ENCODE measurements at regions of chr10 and their contacts with region 1.

Region 1: DNA sequence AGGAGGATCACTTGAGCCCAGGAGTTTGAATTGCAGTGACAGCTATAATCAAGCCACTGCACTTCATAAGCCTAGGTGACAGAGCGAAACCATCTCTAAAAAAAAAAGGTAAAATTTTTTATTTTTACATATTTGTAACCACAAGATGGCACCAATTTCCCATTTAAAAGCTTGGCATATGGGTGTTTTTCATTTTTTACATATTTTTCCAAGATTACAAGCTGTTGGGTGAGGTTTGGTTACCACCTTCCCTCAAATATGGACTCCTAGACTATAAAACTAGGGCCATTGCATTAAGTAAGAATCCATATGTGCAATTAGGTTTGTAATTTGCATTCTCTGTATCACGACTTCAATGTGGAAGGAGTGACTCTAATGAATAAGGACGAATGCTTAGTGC is 129.3 kb upstream of the ACBD5 start:
- DNase-seq: peak; percentile 12 to 25
- ATAC-seq: peak in 1 of 2 experiments; percentile 26; a peak in 1 of 6 replicates
- H3K4me3 ChIP-seq: no peak overlapping the region
- H3K27ac ChIP-seq: no peak overlapping the region
- H3K4me1 ChIP-seq: no peaks in the 10 kb centered on the region
- CTCF ChIP-seq: peak; percentile 66
- EP300 ChIP-seq: no peak
- POLR2A ChIP-seq: no peak
- RAD21 ChIP-seq: peak; percentile 60 to 77

Region 2: GRCh38 chr10:27388761-27389399 is 19.0 kb after region 1 on chr10:
- CTCF ChIA-PET with region 1: interaction called, 13 read pairs
- POLR2A ChIA-PET with region 1: no interaction called
- DNase-seq: no peak
- ATAC-seq: no peak
- H3K4me3 ChIP-seq: no peak overlapping the region
- H3K27ac ChIP-seq: no peak overlapping the region
- H3K4me1 ChIP-seq: peaks cover 8% of the 10 kb centered on the region
- CTCF ChIP-seq: no peak
- EP300 ChIP-seq: no peak
- POLR2A ChIP-seq: no peak
- RAD21 ChIP-seq: no peak

Region 3: DNA sequence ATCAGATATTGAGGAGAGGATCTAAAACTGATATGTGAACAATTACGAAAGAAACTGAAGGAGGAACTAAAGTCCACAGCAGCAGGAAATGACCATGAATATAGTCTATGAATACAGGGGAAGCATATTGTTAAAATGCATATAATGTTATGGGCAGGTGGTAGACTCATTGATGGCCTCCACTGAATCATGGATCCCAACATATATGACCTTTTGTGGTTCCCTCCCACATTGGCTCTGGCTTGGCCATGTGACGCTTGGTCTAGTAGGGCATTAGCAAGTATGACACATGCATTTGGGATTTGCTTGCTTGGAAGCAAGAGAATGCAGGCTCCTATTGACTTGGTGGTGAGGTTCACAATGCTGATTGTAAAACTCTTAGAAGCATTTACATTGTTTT is 79.0 kb after region 1 on chr10:
- CTCF ChIA-PET with region 1: no interaction called
- POLR2A ChIA-PET with region 1: no interaction called
- DNase-seq: peak in 1 of 2 experiments; percentile 17
- ATAC-seq: no peak
- H3K4me3 ChIP-seq: no peak overlapping the region
- H3K27ac ChIP-seq: no peak overlapping the region
- H3K4me1 ChIP-seq: no peaks in the 10 kb centered on the region
- CTCF ChIP-seq: no peak
- EP300 ChIP-seq: no peak
- POLR2A ChIP-seq: no peak
- RAD21 ChIP-seq: no peak

Region 4: GRCh38 chr10:28241741-28242399 is 872.0 kb after region 1 on chr10:
- CTCF ChIA-PET with region 1: interaction called, 12 read pairs
- POLR2A ChIA-PET with region 1: no interaction called
- DNase-seq: peak; percentile 43 to 53
- ATAC-seq: peak; percentile 78 to 80; a peak in 5 of 6 replicates
- H3K4me3 ChIP-seq: no peak overlapping the region
- H3K27ac ChIP-seq: no peak overlapping the region
- H3K4me1 ChIP-seq: no peaks in the 10 kb centered on the region
- CTCF ChIP-seq: peak; percentile 93
- EP300 ChIP-seq: no peak
- POLR2A ChIP-seq: no peak
- RAD21 ChIP-seq: peak; percentile 80 to 83

Measured in A549 (cell line).